Tibial artery (tissue), 4 donors: ENCODE measurements at regions of chr20 and their contacts with region 1.

Region 1: DNA sequence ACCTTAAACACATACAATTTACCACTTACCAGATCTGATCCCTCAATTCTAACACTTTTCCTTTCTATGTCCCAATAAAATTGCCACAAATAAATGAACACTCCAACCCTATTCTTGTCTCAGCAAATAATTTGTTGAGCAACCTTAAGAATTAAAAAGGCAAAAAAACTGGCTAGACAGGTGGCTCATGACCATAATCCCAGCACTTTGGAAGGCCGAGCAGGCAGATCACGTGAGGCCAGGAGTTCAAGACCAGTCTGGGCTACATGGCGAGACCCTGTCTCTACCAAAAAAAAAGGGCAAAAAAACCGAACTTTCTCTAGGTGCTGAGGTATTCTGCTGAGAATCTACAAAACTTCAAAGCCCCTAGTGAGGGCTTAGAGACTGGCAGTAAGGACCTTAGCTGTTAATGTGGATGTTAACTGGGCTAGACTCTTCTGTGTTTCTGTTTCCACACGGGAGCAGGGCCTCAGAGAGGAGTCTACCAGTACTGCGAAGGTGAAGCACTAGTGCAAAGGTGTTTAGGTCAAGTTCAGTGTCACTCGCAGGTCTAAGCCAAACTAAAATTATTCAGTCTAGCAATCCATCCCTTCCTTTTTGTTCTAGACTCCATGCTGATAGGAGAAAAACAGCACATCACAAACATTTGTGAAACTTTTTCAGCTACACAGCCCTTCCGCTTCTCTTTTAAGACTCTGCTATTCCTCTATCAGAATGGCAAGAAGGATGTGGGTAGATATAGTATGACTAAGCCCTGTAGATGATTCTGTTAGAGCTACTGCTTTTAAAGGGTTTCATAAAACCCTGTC is 2.6 kb downstream of the FASTKD5 start:
- DNase-seq: no peak
- H3K4me3 ChIP-seq: no peak overlapping the region
- H3K27ac ChIP-seq: no peak overlapping the region
- H3K4me1 ChIP-seq: peaks cover 0 to 59% (median 38%) of the 10 kb centered on the region in 4 donors
- H3K27me3 ChIP-seq: no peaks in the 10 kb centered on the region
- CTCF ChIP-seq: no peak

Region 2: DNA sequence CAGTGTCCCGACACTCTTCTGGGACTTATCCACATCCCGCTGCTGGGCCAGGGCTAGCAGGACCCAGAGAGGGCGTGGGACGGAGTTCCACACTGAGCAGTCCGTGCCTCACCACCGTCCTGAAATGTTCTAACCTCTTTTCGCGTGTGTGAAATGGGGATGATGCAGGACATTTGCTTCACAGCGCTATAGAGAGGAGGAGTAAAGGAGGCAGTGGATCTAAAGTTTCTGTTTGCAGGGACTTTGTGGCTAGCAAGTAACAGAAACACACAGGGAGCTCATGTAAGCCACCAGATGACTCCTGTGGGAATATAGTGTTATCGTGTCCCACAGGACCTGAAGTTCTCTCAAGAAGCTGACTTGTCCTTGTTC is 52.9 kb after region 1 on chr20:
- intact Hi-C with region 1: loop called (anchors 5 kb)
- DNase-seq: no peak
- H3K4me3 ChIP-seq: peak overlapping the region; percentile 92 to 96
- H3K27ac ChIP-seq: peak overlapping the region; percentile 81 to 90
- H3K4me1 ChIP-seq: peaks cover 0 to 17% (median 6%) of the 10 kb centered on the region in 4 donors
- H3K27me3 ChIP-seq: no peaks in the 10 kb centered on the region
- CTCF ChIP-seq: no peak